BJ (cell line): ENCODE measurements at regions of chr2 and their contacts with region 1.

Region 1: GRCh38 chr2:187581125-187581896 is 27.1 kb upstream of the TFPI start:
- DNase-seq: no peak
- H3K4me3 ChIP-seq: 0 out of 2 replicates have a peak overlapping the region, but pooled peaks have one; percentile 8
- H3K27me3 ChIP-seq: no peaks in the 10 kb centered on the region
- CTCF ChIP-seq: peak; percentile 67

Region 2: DNA sequence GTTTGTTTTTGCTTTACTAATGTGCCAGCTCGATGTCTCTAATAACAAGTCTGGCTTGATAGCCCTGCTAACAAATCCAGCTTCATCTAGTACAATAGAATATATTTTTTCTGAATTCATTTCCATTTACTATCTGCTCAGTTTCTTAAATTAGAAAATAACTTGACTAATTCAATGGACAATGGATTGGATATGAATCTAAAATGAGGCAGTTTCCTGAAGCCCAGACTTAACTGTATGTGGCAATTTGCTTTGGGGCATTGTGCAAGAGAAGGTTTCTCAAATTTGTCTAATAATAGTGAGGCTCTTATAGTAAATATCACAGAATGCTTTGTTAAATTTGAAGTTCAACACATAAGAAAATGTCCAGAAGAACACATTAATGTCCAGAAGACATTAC is 159.0 kb before region 1 on chr2:
- CTCF ChIA-PET with region 1: no interaction called
- POLR2A ChIA-PET with region 1: no interaction called
- DNase-seq: no peak
- H3K4me3 ChIP-seq: no peak overlapping the region
- H3K27me3 ChIP-seq: no peaks in the 10 kb centered on the region
- CTCF ChIP-seq: no peak

Region 3: DNA sequence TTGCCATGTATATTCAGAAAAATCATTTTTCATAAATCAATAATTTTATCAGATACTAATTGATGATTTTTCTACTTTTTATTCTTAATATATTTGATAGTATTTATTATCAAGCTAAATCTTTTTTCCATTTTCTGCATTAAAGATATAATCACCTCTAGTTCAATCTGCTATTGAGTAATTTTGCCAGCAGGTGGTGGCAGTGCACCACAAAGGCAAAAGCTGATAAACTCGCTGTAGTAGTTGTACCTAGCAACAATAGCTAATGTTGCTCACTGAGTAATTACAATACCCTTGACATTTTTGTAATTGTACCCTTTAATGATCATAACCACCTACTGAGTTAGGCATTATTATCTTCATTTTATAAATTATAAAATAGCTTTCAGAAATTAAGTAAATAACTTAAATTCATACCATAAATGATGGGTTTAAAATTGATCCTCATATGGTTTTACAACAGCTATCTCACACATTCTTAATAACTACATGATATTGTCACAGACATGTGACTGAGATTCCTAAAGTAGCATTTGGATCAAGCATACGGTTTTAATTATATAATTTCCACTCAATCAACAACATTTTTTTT is 81.3 kb before region 1 on chr2:
- CTCF ChIA-PET with region 1: interaction called, 275 read pairs
- POLR2A ChIA-PET with region 1: no interaction called
- DNase-seq: no peak
- H3K4me3 ChIP-seq: no peak overlapping the region
- H3K27me3 ChIP-seq: no peaks in the 10 kb centered on the region
- CTCF ChIP-seq: peak; percentile 73

Region 4: GRCh38 chr2:187549951-187550555 is 31.3 kb before region 1 on chr2:
- CTCF ChIA-PET with region 1: interaction called, 11 read pairs
- POLR2A ChIA-PET with region 1: no interaction called
- DNase-seq: no peak
- H3K4me3 ChIP-seq: no peak overlapping the region
- H3K27me3 ChIP-seq: no peaks in the 10 kb centered on the region
- CTCF ChIP-seq: no peak

Region 5: GRCh38 chr2:187618813-187619212 is 37.5 kb after region 1 on chr2:
- CTCF ChIA-PET with region 1: no interaction called
- POLR2A ChIA-PET with region 1: no interaction called
- DNase-seq: no peak
- H3K4me3 ChIP-seq: no peak overlapping the region
- H3K27me3 ChIP-seq: no peaks in the 10 kb centered on the region
- CTCF ChIP-seq: no peak

Region 6: DNA sequence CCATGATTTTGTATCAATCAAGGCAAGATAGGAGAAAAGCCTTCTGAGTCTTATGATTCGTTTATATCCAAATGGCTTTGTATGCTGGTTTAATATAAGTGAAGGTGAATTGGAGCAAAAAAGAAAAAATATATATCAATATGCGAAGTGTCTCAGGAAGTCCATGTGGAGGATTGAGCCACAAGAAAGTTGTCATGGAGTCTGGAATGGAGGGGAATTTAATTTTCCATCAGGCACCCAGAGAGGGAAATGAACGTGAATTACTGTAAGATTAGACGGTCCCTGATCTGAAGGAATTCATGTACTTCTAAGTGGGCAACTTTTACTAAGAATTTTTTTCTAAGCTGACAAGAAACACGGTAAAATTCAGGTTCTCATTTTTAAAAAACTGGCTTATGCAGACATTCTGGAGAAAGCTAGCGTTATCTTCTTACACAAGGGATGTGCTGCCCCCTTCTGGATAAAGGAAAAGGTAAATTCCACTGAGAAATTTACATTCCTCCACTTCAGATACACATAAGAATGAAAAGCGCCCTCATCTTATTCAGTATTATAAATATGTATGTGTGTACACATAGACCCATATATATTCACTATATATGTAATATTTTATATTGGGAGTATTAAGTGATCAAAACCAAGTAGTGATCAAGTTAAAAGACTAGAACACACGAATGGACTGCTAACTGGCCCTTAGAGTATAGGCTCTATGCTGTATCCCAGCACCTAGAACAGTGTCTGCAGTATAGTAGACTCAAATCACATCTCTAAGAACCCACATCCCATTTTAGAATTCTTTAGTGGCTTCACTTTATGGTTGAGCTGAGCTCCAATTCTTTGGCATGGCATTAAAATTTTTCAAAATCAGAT is 261.9 kb after region 1 on chr2:
- CTCF ChIA-PET with region 1: interaction called, 22 read pairs
- POLR2A ChIA-PET with region 1: no interaction called
- DNase-seq: peak; percentile 3
- H3K4me3 ChIP-seq: no peak overlapping the region
- H3K27me3 ChIP-seq: peaks cover 2% of the 10 kb centered on the region; the same call in 1 of the 2 replicates
- CTCF ChIP-seq: peak; percentile 62